Naive thymus-derived CD8-positive, alpha-beta T cell (primary cell): ENCODE measurements at regions of chr15 and their contacts with region 1.

Region 1: GRCh38 chr15:51971375-51972133 is at the start of gene LEO1:
- DNase-seq: peak; percentile 67 to 95 (median 90)
- ATAC-seq: peak; percentile 87
- H3K4me3 Mint-ChIP-seq: peak within 1 kb of the TSS; percentile 91 to 100 (median 98)
- H3K27ac Mint-ChIP-seq: peak within 1 kb of the TSS; percentile 94 to 100 (median 98)
- H3K4me1 Mint-ChIP-seq: peaks cover 10 to 33% (median 22%) of the 10 kb centered on the region in 4 donors
- H3K27me3 Mint-ChIP-seq: peaks cover 0 to 3% (median 0%) of the 10 kb centered on the region in 5 donors
- polyA plus RNA-seq, gene LEO1: 15.0 to 26.5 (median 19.6) TPM

Region 2: GRCh38 chr15:51982013-51982769 is 10.6 kb after region 1 on chr15:
- POLR2A ChIA-PET with region 1: interaction called, 16 read pairs
- DNase-seq: peak in 8 of 10 donors; percentile 2 to 72 (median 43)
- ATAC-seq: peak; percentile 98 to 99
- H3K4me3 Mint-ChIP-seq: peak overlapping the region; percentile 48 to 87 (median 80)
- H3K27ac Mint-ChIP-seq: peak overlapping the region; percentile 63 to 90 (median 79)
- H3K4me1 Mint-ChIP-seq: peaks cover 6 to 14% (median 11%) of the 10 kb centered on the region in 4 donors
- H3K27me3 Mint-ChIP-seq: no peaks in the 10 kb centered on the region

Region 3: DNA sequence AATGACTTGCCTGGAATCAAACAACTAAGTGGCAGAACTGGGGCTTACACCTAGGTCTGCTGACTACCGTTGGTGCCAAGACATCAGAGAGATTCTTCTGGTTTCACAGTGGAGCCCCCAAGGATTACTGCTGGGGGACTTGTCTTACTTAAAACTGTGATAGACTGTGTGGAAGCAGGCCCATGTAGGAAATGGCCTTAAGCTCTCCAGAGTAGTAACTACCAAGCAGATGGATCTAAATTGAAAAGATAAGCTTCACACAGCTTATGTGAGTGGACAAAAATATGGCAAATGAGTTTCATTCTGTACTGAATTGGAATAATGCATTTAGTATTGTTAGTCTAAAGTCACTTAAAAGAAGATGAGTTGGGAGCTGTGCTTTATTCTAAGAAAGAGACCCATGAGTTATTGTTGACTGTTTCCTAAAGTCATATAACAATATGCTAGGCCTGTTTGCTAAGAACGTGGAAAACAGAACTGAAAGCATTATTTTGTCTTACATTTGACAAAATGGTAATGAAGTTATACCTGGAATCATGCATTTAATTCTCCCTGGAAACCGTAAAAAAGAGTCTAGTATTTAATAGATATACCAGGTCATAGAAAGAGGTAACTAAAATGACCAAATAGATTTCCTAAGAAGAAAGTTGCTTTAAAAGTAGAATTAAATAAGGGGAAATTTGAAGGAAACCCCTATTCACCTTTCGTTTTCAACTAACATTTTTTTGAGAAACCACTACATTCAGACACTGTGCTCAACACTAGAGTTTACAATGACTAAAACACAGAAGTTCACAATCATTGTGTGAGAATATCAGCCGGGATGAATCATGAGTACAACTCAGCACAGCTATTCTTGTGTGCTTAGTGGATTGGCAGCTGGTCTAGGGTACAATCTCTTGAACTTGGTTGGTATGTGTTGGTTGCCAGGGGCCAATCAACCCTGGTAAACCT is 34.5 kb after region 1 on chr15:
- POLR2A ChIA-PET with region 1: no interaction called
- DNase-seq: no peak
- ATAC-seq: no peak
- H3K4me3 Mint-ChIP-seq: no peak overlapping the region
- H3K27ac Mint-ChIP-seq: no peak overlapping the region
- H3K4me1 Mint-ChIP-seq: peaks cover 5 to 13% (median 12%) of the 10 kb centered on the region in 4 donors
- H3K27me3 Mint-ChIP-seq: no peaks in the 10 kb centered on the region

Region 4: GRCh38 chr15:52039925-52040781 is 68.6 kb after region 1 on chr15:
- POLR2A ChIA-PET with region 1: interaction called, 12 read pairs
- DNase-seq: no peak
- ATAC-seq: peak in 1 of 2 donors; percentile 18
- H3K4me3 Mint-ChIP-seq: peak overlapping the region in 4 of 10 donors; percentile 3 to 31 (median 5)
- H3K27ac Mint-ChIP-seq: peak overlapping the region; percentile 41 to 83 (median 66)
- H3K4me1 Mint-ChIP-seq: peaks cover 26 to 68% (median 61%) of the 10 kb centered on the region in 4 donors
- H3K27me3 Mint-ChIP-seq: no peaks in the 10 kb centered on the region